Caco-2 (cell line): ENCODE measurements at regions of chr7 and their contacts with region 1.

Region 1: GRCh38 chr7:33109005-33109757 is at the start of gene RP9:
- DNase-seq: peak; percentile 84 to 91
- H3K4me3 ChIP-seq: peak within 1 kb of the TSS; percentile 87
- H3K4me3 Mint-ChIP-seq: peak within 1 kb of the TSS; percentile 83
- H3K27ac Mint-ChIP-seq: peak within 1 kb of the TSS; percentile 63
- H3K4me1 ChIP-seq: peaks cover 4% of the 10 kb centered on the region
- H3K4me1 Mint-ChIP-seq: peaks cover 7% of the 10 kb centered on the region
- H3K27me3 ChIP-seq: no peaks in the 10 kb centered on the region; the same call in 1 of the 2 replicates
- H3K27me3 Mint-ChIP-seq: peaks cover 10% of the 10 kb centered on the region
- CTCF ChIP-seq: peak; percentile 61 to 65
- total RNA-seq, gene RP9: 20.3 and 22.2 TPM in 2 replicates

Region 2: DNA sequence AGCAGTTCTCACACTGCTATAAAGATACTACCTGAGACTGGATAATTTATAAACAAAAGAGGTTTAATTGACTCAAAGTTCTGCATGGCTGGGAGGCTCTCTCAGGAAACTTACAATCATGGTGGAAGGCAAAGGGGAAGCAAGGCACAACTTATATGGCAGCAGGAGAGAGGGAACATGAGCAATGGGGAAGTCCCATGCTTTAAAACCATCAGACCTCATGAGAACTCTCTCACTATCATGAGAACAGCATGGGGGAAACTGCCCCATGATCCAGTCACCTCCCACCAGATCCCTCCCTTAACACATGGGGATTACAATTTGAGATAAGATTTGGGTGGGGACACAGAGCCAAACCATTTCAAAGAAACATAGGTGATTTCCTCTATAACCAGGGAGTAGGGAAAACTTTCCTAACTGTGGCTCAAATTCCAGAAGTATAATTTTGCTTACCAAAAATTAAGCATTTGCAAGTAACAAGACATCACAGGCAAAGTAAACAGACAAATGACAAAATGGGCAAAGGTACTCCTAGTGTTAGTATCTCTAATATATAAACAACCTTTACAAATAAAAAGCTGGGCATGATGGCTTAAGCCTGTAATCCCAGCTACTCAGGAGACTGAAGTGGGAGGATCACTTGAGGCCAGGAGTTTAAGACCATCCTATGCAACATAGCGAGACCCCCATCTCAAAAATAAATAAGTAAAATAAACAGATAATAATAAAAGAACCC is 305.6 kb before region 1 on chr7:
- CTCF ChIA-PET with region 1: no interaction called
- POLR2A ChIA-PET with region 1: no interaction called
- intact Hi-C with region 1: loop called (anchors 10 kb)
- DNase-seq: no peak
- H3K4me3 ChIP-seq: no peak overlapping the region
- H3K4me3 Mint-ChIP-seq: no peak overlapping the region
- H3K27ac Mint-ChIP-seq: no peak overlapping the region
- H3K4me1 ChIP-seq: no peaks in the 10 kb centered on the region
- H3K4me1 Mint-ChIP-seq: no peaks in the 10 kb centered on the region
- H3K27me3 ChIP-seq: no peaks in the 10 kb centered on the region
- H3K27me3 Mint-ChIP-seq: no peaks in the 10 kb centered on the region
- CTCF ChIP-seq: no peak

Region 3: GRCh38 chr7:32891800-32892520 is 217.2 kb before region 1 on chr7:
- CTCF ChIA-PET with region 1: no interaction called
- POLR2A ChIA-PET with region 1: no interaction called
- intact Hi-C with region 1: loop called (anchors 2 kb)
- DNase-seq: peak; percentile 95 to 98
- H3K4me3 ChIP-seq: peak overlapping the region; percentile 86
- H3K4me3 Mint-ChIP-seq: peak overlapping the region; percentile 99
- H3K27ac Mint-ChIP-seq: peak overlapping the region; percentile 95
- H3K4me1 ChIP-seq: peaks cover 41% of the 10 kb centered on the region
- H3K4me1 Mint-ChIP-seq: peaks cover 25% of the 10 kb centered on the region
- H3K27me3 ChIP-seq: no peaks in the 10 kb centered on the region
- H3K27me3 Mint-ChIP-seq: no peaks in the 10 kb centered on the region
- CTCF ChIP-seq: no peak

Region 4: GRCh38 chr7:33062782-33063443 is 46.3 kb before region 1 on chr7:
- CTCF ChIA-PET with region 1: interaction called, 14 read pairs
- POLR2A ChIA-PET with region 1: no interaction called
- intact Hi-C with region 1: loop called (anchors 2 kb)
- DNase-seq: peak; percentile 94
- H3K4me3 ChIP-seq: peak overlapping the region; percentile 91
- H3K4me3 Mint-ChIP-seq: peak overlapping the region; percentile 97
- H3K27ac Mint-ChIP-seq: peak overlapping the region; percentile 87
- H3K4me1 ChIP-seq: 0 out of 2 replicates have a peak, but pooled peaks cover 5% of the 10 kb centered on the region
- H3K4me1 Mint-ChIP-seq: peaks cover 7% of the 10 kb centered on the region
- H3K27me3 ChIP-seq: no peaks in the 10 kb centered on the region
- H3K27me3 Mint-ChIP-seq: no peaks in the 10 kb centered on the region
- CTCF ChIP-seq: no peak